ENCODE measurements at regions of chr17 and their contacts with region 1.

Region 1: GRCh38 chr17:49567871-49568694 is 7.6 kb upstream of the NXPH3 start:
- DNase-seq: peak; percentile 89 to 91
- ATAC-seq: peak; percentile 77 to 86 (median 80)
- H3K4me3 ChIP-seq: peak overlapping the region; percentile 20 to 60 (median 46)
- H3K27ac ChIP-seq: peak overlapping the region; percentile 47 to 89 (median 82)
- H3K4me1 ChIP-seq: peaks cover 0 to 42% (median 34%) of the 10 kb centered on the region in 9 donors
- H3K27me3 ChIP-seq: peaks cover 0 to 14% (median 0%) of the 10 kb centered on the region in 7 donors
- CTCF ChIP-seq: peak; percentile 87 to 98 (median 94)

Region 2: GRCh38 chr17:49610883-49611531 is 42.9 kb after region 1 on chr17:
- intact Hi-C with region 1: no loop called
- DNase-seq: no peak
- ATAC-seq: peak in 4 of 8 donors; percentile 15 to 30 (median 28)
- H3K4me3 ChIP-seq: no peak overlapping the region
- H3K27ac ChIP-seq: peak overlapping the region in 3 of 10 donors; percentile 6 to 33 (median 32)
- H3K4me1 ChIP-seq: peaks cover under 1 to 43% (median 26%) of the 10 kb centered on the region in 9 donors
- H3K27me3 ChIP-seq: no peaks in the 10 kb centered on the region
- CTCF ChIP-seq: no peak

Region 3: DNA sequence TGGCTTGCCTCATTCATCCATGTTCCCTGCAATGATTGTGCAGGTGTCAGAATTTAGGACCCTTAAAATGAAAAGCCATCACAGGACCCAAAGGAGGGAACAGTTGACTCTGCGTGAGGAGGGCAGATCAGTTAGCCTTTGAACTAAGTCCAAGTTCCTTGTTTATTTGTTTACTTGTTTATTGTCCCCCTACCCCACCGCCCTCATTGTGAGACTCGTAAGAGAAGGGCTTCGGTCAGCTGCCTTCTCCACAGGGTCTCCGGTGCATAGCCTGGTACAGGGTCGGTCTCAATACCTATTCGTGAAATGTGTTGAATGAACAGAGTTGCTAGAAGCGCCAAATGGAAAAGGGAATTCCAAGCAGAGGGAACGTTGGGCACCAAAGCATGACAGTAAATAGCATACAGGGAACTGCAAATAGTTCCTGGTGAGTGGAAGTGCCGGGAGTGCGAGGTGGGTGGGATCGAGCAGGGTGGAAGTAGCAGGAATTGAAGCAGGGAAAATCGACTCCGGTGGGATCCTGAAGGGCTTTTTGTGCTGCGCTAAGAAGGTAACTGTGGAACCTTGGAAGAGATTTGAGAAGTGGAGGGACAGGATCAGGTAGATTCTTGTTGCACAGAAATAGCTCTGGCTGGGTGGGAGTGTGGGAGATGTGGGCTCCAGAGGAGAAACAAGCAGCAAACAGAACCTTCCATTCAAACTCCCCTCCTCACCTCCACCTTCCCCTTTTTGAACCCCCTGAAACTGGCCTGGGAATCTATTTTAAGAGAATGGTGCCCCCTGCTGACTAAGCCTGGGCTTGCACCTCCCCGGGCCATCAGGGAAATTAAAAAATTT is 127.0 kb after region 1 on chr17:
- intact Hi-C with region 1: loop called (anchors 1 to 2 kb)
- DNase-seq: peak; percentile 54
- ATAC-seq: peak in 1 of 8 donors; percentile 33
- H3K4me3 ChIP-seq: no peak overlapping the region
- H3K27ac ChIP-seq: no peak overlapping the region
- H3K4me1 ChIP-seq: peaks cover 5 to 62% (median 25%) of the 10 kb centered on the region in 9 donors
- H3K27me3 ChIP-seq: no peaks in the 10 kb centered on the region
- CTCF ChIP-seq: peak; percentile 86 to 97 (median 93)

Region 4: DNA sequence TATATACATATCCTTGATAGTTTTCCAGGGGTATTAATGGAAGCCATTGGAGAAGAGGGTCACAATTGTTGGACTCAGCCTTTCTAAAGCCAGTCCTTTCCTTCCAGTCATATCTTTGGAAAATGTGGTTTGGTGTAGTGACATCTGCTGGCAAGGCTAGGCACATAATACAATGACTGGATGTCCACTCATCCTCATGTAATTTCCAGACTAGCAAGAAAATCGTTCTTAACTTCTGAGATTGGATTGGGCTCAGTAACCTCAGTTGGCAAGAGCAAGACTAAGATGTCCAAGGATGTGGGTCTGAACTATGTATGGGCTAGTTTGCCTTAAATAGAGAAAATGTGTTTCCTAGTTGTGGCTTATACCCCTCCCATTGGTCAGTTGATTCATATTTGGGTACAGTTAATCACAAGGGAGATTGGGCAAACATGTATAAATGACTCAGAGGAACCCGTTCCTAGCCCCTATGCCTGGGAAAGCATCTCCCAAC is 211.7 kb after region 1 on chr17:
- intact Hi-C with region 1: loop called in 8 of 10 experiments (anchors 2 to 10 kb)
- DNase-seq: peak in 1 of 2 donors; percentile 42
- ATAC-seq: peak; percentile 19 to 68 (median 64)
- H3K4me3 ChIP-seq: no peak overlapping the region
- H3K27ac ChIP-seq: peak overlapping the region in 3 of 10 donors; percentile 17 to 60 (median 17)
- H3K4me1 ChIP-seq: peaks cover 4 to 68% (median 46%) of the 10 kb centered on the region in 9 donors
- H3K27me3 ChIP-seq: no peaks in the 10 kb centered on the region
- CTCF ChIP-seq: peak in 8 of 9 donors; percentile 31 to 78 (median 64)

Region 5: GRCh38 chr17:49788478-49789242 is 220.6 kb after region 1 on chr17 and contains the start of gene KAT7:
- intact Hi-C with region 1: loop called in 5 of 10 experiments (anchors 2 to 10 kb)
- DNase-seq: peak; percentile 99
- ATAC-seq: peak; percentile 95 to 97 (median 96)
- H3K4me3 ChIP-seq: peak within 1 kb of the TSS; percentile 77 to 100 (median 94)
- H3K27ac ChIP-seq: peak within 1 kb of the TSS; percentile 88 to 100 (median 98)
- H3K4me1 ChIP-seq: peaks cover 6 to 67% (median 57%) of the 10 kb centered on the region in 9 donors
- H3K27me3 ChIP-seq: no peaks in the 10 kb centered on the region
- CTCF ChIP-seq: peak in 1 of 9 donors; percentile 41
- total RNA-seq, gene KAT7: 48.9 to 81.3 (median 66.3) TPM

Region 6: GRCh38 chr17:49851387-49852291 is 283.6 kb after region 1 on chr17:
- intact Hi-C with region 1: loop called (anchors 1 to 10 kb)
- DNase-seq: peak; percentile 84
- ATAC-seq: peak; percentile 76 to 91 (median 86)
- H3K4me3 ChIP-seq: peak overlapping the region; percentile 38 to 76 (median 62)
- H3K27ac ChIP-seq: peak overlapping the region in 9 of 10 donors; percentile 8 to 75 (median 62)
- H3K4me1 ChIP-seq: peaks cover 3 to 25% (median 19%) of the 10 kb centered on the region in 9 donors
- H3K27me3 ChIP-seq: peaks cover 0 to 6% (median 0%) of the 10 kb centered on the region in 7 donors
- CTCF ChIP-seq: peak; percentile 43 to 86 (median 83)

Region 7: GRCh38 chr17:49861150-49861892 is 293.2 kb after region 1 on chr17:
- intact Hi-C with region 1: loop called in 3 of 10 experiments (anchors 5 to 10 kb)
- DNase-seq: peak in 1 of 2 donors; percentile 27
- ATAC-seq: peak in 7 of 8 donors; percentile 16 to 58 (median 40)
- H3K4me3 ChIP-seq: no peak overlapping the region
- H3K27ac ChIP-seq: no peak overlapping the region
- H3K4me1 ChIP-seq: peaks cover 0 to 12% (median 3%) of the 10 kb centered on the region in 9 donors
- H3K27me3 ChIP-seq: peaks cover 0 to 14% (median 0%) of the 10 kb centered on the region in 7 donors
- CTCF ChIP-seq: peak; percentile 54 to 90 (median 84)

Region 8: DNA sequence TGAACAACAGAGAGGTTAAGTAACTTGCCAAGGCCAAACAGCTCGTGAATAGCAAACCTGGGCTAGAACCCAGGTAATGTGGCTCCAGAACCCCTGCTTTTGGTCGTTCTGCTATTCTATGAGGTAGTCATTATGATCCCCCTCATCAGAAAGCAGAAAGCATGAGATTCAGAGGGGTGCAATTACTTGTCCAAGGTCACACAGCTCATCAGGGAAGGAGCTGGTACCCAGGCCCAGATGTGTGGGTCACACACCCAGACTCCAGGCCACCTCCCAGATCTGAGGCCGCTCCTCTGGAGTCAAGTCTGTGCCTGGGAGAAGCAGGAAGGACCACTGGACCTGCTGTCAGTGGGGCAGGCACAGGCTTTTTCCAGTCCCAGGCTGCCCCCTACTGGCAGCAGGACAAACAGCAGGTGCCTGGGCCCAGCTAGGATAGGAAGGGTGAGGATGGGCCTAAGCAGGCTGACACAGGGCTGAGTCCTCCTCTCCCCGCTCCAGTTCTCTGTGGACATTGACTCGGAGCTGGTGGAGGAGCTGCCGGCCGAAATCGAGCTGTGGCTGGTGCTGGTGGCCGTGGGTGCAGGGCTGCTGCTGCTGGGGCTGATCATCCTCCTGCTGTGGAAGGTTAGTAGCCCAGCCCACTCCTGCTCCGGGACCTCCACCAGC is 519.3 kb after region 1 on chr17:
- intact Hi-C with region 1: loop called in 1 of 10 experiments (anchors 10 kb)
- DNase-seq: peak; percentile 63 to 78
- ATAC-seq: peak; percentile 76 to 93 (median 86)
- H3K4me3 ChIP-seq: no peak overlapping the region
- H3K27ac ChIP-seq: no peak overlapping the region
- H3K4me1 ChIP-seq: no peaks in the 10 kb centered on the region
- H3K27me3 ChIP-seq: no peaks in the 10 kb centered on the region
- CTCF ChIP-seq: peak; percentile 94 to 99 (median 96)